Activated T-helper 1 cell treated with anti-CD3 and anti-CD28 coated beads, Interleukin-12 subunit alpha, Interleukin-12 subunit beta, Interleukin-2, Interleukin-4 antibody, amounts not matched to agents 30 ng/mL and 10 ng/mL and 1 ng/mL, durations not matched to agents 14 hours and 24 hours and 36 hours (primary cell): ENCODE measurements at regions of chr20 and their contacts with region 1.

Region 1: GRCh38 chr20:297098-297924 is at the start of gene ZCCHC3:
- DNase-seq: peak; percentile 85
- H3K4me3 Mint-ChIP-seq: peak within 1 kb of the TSS; percentile 99
- H3K27ac Mint-ChIP-seq: peak within 1 kb of the TSS; percentile 100
- H3K4me1 Mint-ChIP-seq: peaks cover 52% of the 10 kb centered on the region
- H3K27me3 Mint-ChIP-seq: no peaks in the 10 kb centered on the region
- total RNA-seq, gene ZCCHC3: 25.9 TPM in 2 replicates

Region 2: GRCh38 chr20:309841-310644 is 12.7 kb after region 1 on chr20:
- intact Hi-C with region 1: loop called (anchors 1 kb)
- DNase-seq: peak; percentile 80
- H3K4me3 Mint-ChIP-seq: peak overlapping the region; percentile 81
- H3K27ac Mint-ChIP-seq: peak overlapping the region; percentile 80
- H3K4me1 Mint-ChIP-seq: peaks cover 20% of the 10 kb centered on the region
- H3K27me3 Mint-ChIP-seq: peaks cover 3% of the 10 kb centered on the region

Region 3: DNA sequence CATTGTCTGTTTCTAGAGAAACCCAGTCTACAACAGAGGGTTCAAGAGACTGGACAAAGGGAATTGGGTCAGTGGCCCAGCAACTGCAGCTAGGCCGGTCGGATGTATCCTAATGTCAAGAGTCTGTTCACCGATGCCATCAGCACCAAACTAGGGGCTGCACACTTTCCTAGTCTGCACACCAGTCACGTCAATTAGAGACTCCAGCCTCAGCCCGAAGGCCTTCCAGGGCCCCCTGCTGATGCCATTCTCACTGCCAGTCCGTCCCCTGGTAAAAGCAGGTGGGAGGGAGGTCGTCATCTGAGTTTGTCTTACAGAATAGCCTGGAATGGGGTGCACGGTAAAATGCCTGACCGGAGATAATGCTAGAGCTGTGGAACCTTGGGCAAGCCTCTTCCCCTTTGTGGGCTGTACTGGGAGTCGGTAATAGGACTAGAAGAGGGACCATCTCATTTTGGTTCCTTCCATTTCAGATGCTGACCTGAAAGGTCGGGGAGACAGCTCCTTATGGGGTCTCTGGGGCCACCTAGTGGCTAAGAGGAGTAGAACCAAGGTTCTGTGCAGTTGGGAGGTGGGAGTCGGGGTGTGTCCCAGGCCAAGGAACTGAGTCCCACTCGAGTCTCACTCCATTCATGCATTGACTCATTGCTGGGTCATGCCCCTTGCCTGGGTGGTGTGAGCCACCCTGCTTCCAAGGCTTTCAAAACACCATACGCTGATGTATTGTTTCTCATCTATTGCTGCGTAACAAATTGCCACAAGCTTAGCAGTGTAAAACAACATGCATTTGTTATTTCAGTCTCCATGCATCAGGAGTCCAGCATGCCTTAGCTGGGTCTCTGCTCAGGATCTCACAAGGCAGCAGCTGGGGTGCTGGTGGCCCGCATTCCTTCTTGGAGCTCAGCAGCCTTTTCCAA is 33.2 kb after region 1 on chr20:
- intact Hi-C with region 1: loop called (anchors 1 kb)
- DNase-seq: peak; percentile 44
- H3K4me3 Mint-ChIP-seq: no peak overlapping the region
- H3K27ac Mint-ChIP-seq: no peak overlapping the region
- H3K4me1 Mint-ChIP-seq: peaks cover 18% of the 10 kb centered on the region
- H3K27me3 Mint-ChIP-seq: peaks cover 3% of the 10 kb centered on the region

Region 4: DNA sequence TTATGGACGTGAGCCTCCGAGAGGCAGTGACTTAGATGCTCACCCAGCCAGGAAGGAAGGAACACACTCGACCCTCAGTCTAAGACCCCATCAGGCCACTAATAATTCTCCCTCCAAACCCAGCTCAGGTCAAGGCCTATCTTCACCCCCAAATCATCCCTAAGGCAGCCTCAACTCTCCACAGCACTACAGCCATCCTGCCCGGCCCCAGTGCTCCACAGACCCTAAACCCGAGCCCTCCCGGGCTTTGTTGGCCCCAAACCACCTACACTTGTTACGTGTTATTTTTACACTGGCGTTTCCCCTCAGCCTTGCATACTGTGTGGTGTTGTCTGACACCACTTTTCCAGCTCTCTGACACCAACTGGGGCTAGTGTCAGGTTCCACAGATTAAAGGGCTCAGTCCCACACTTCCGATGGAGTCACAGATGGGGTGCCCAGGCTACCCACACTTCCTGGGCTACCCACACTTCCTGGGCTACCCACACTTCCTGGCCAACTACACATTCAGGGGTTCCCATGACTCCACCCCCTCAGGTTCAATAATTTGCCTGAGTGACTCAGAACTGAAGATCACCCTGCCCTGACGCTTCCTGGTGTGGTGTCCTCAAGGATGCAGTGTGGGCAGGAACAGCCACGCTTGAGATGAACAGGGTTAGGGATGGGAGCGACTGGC is 136.1 kb after region 1 on chr20:
- intact Hi-C with region 1: loop called (anchors 1 kb)
- DNase-seq: peak; percentile 62
- H3K4me3 Mint-ChIP-seq: peak overlapping the region; percentile 66
- H3K27ac Mint-ChIP-seq: peak overlapping the region; percentile 98
- H3K4me1 Mint-ChIP-seq: peaks cover 79% of the 10 kb centered on the region
- H3K27me3 Mint-ChIP-seq: no peaks in the 10 kb centered on the region

Region 5: GRCh38 chr20:543369-544152 is 246.2 kb after region 1 on chr20 and contains the start of gene CSNK2A1:
- intact Hi-C with region 1: loop called (anchors 5 kb)
- DNase-seq: peak; percentile 94
- H3K4me3 Mint-ChIP-seq: peak within 1 kb of the TSS; percentile 91
- H3K27ac Mint-ChIP-seq: peak within 1 kb of the TSS; percentile 91
- H3K4me1 Mint-ChIP-seq: peaks cover 47% of the 10 kb centered on the region
- H3K27me3 Mint-ChIP-seq: peaks cover 3% of the 10 kb centered on the region
- total RNA-seq, gene CSNK2A1: 181 and 185 TPM in 2 replicates